ENCODE measurements at regions of chr22 and their contacts with region 1.

Region 1: DNA sequence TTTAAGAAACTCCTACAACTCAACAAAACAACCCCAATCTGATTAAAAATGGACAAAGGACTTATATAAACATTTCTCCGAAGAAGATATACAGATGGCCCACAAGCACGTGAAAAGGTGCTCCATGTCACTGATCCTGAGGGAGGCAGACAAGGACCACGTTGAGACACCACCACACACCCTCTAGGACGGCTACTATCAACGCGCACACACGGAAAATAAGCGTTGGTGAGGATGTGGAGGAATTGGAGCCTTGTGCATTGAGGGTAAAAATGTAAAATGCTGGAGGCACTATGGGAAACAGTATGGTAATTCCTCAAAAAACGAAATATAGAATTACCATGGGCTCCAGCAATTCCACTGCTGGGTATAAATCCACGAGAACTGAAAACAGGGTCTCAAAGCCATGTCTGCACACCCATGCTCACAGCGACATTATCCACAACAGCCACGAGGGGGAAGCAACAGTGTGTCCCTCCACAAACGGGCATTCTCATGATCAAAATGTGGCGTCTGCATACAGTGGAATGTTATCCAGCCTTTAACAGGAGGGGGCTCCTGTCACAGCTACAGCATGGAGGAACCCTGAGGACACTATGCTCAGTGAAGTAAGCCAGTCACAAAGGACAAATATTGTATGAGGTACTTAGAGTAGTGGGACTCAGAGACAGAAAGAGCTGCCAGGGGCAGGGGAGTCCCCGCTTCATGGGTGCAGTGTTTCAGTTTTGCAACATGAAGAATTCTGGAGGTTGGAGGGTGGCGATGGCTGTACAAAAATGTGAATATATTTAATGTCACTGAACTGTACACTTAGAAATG is 22.5 kb downstream of the YPEL1 start:
- DNase-seq: peak; percentile 99
- ATAC-seq: peak; percentile 96
- H3K4me3 ChIP-seq: peak overlapping the region; percentile 5; the same call in 1 of the 2 replicates
- H3K27ac ChIP-seq: no peak overlapping the region; the same call in 2 of the 3 replicates
- H3K4me1 ChIP-seq: peaks cover 9 to 14% of the 10 kb centered on the region in 2 experiments; a peak in 4 of 5 replicates
- H3K27me3 ChIP-seq: peaks cover 41 to 71% of the 10 kb centered on the region in 2 experiments
- CTCF ChIP-seq: peak in 1 of 3 experiments; percentile 98; a peak in 2 of 6 replicates
- EP300 ChIP-seq: peak; percentile 64
- POLR2A ChIP-seq: no peak
- RAD21 ChIP-seq: no peak

Region 2: GRCh38 chr22:21754523-21754922 is 41.4 kb after region 1 on chr22:
- CTCF ChIA-PET with region 1: interaction called, 3 read pairs
- POLR2A ChIA-PET with region 1: interaction called, 6 read pairs
- in situ Hi-C with region 1: no loop called
- intact Hi-C with region 1: loop called (anchors 1 kb)
- DNase-seq: peak; percentile 100
- ATAC-seq: peak; percentile 93
- H3K4me3 ChIP-seq: peak overlapping the region; percentile 4; the same call in 1 of the 2 replicates
- H3K27ac ChIP-seq: peak overlapping the region; percentile 70
- H3K4me1 ChIP-seq: peaks cover 43% of the 10 kb centered on the region in 2 experiments
- H3K27me3 ChIP-seq: no peaks in the 10 kb centered on the region
- CTCF ChIP-seq: no peak
- EP300 ChIP-seq: no peak
- POLR2A ChIP-seq: no peak
- RAD21 ChIP-seq: no peak

Region 3: DNA sequence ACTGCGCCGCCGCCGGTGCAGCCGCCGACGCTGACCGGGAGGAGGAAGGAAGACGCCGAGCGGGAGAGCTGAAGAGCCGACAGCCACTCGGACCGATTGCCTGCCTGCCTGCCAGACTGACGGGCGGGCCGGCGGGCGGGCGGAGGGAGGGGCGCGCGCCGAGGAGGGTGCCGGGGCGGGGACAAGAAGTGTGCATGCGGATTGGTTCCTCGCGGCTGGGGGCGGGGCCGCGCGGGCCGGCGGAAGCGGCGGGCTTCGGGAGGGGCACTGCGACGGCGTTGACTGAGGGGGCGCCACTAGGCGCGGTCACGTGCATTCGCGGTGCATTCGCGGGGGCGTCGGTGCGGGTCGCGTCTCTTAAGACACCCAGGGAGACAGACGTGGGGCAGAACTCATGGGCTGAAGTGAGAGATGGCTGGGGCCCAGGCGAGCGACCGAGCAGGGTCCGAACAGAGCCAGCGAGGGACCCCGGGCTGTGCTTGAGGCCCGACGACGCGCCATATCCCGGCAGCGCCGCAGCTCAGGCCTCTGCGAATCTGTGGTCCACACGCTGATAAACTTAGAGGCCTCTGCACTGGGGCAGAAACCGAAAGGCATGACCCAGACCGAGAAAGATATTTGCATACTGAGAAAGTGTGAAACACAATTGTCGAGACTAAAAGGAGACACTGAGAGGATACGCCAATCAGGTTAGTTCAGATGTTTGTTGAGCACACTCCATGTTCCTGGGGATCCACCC is 154.6 kb after region 1 on chr22 and contains the start of gene MAPK1:
- CTCF ChIA-PET with region 1: interaction called, 9 read pairs
- POLR2A ChIA-PET with region 1: interaction called, 4 read pairs
- in situ Hi-C with region 1: no loop called
- intact Hi-C with region 1: loop called (anchors 1 kb)
- DNase-seq: peak; percentile 100
- ATAC-seq: peak; percentile 92
- H3K4me3 ChIP-seq: peak within 1 kb of the TSS; percentile 55
- H3K27ac ChIP-seq: peak within 1 kb of the TSS; percentile 81
- H3K4me1 ChIP-seq: peaks cover 52 to 57% of the 10 kb centered on the region in 2 experiments
- H3K27me3 ChIP-seq: no peaks in the 10 kb centered on the region
- CTCF ChIP-seq: no peak
- EP300 ChIP-seq: no peak
- POLR2A ChIP-seq: no peak
- RAD21 ChIP-seq: no peak
- polyA plus RNA-seq, gene MAPK1: 46.3 to 51.4 TPM

Region 4: GRCh38 chr22:21938071-21938822 is 225.1 kb after region 1 on chr22:
- CTCF ChIA-PET with region 1: interaction called, 609 read pairs
- POLR2A ChIA-PET with region 1: interaction called, 16 read pairs
- in situ Hi-C with region 1: no loop called
- intact Hi-C with region 1: loop called (anchors 1 kb)
- DNase-seq: peak; percentile 100
- ATAC-seq: peak; percentile 97
- H3K4me3 ChIP-seq: peak overlapping the region; percentile 45
- H3K27ac ChIP-seq: peak overlapping the region; percentile 85
- H3K4me1 ChIP-seq: peaks cover 12 to 52% of the 10 kb centered on the region in 2 experiments
- H3K27me3 ChIP-seq: no peaks in the 10 kb centered on the region
- CTCF ChIP-seq: peak in 2 of 3 experiments; percentile 100; a peak in 4 of 6 replicates
- EP300 ChIP-seq: peak; percentile 83
- POLR2A ChIP-seq: no peak
- RAD21 ChIP-seq: no peak

Region 5: DNA sequence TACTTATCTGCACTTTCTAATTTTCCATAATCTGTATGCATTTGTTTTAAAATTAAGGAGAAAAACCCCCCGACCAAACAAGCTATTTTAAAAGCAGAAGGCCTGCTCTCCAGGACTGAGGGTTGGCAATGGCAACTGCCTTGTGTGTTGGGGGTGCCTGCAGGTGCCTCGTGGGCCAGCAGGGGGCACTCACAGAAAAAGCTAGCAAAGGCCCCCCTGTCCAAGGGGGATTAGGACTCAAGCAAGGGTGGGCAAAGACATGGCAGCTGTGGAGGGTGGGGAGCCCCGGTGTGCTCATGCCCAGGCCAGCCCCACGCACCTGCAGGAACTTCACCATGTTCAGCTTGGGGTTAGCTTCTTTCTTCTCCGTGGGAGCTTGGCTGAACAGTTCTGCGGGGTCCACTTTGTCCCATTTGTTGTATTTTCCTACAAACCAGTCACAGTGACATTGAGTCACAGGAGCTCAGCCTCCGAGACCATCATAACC is 259.2 kb after region 1 on chr22:
- CTCF ChIA-PET with region 1: interaction called, 10 read pairs
- POLR2A ChIA-PET with region 1: no interaction called
- in situ Hi-C with region 1: no loop called
- intact Hi-C with region 1: no loop called
- DNase-seq: peak; percentile 91 to 100 (median 99)
- ATAC-seq: peak; percentile 86
- H3K4me3 ChIP-seq: no peak overlapping the region
- H3K27ac ChIP-seq: no peak overlapping the region
- H3K4me1 ChIP-seq: peaks cover 0 to 19% of the 10 kb centered on the region in 2 experiments; a peak in 1 of 5 replicates
- H3K27me3 ChIP-seq: no peaks in the 10 kb centered on the region
- CTCF ChIP-seq: peak; percentile 97 to 100 (median 99)
- EP300 ChIP-seq: no peak
- POLR2A ChIP-seq: no peak
- RAD21 ChIP-seq: peak in 1 of 2 experiments; percentile 88; a peak in 2 of 4 replicates

Region 6: DNA sequence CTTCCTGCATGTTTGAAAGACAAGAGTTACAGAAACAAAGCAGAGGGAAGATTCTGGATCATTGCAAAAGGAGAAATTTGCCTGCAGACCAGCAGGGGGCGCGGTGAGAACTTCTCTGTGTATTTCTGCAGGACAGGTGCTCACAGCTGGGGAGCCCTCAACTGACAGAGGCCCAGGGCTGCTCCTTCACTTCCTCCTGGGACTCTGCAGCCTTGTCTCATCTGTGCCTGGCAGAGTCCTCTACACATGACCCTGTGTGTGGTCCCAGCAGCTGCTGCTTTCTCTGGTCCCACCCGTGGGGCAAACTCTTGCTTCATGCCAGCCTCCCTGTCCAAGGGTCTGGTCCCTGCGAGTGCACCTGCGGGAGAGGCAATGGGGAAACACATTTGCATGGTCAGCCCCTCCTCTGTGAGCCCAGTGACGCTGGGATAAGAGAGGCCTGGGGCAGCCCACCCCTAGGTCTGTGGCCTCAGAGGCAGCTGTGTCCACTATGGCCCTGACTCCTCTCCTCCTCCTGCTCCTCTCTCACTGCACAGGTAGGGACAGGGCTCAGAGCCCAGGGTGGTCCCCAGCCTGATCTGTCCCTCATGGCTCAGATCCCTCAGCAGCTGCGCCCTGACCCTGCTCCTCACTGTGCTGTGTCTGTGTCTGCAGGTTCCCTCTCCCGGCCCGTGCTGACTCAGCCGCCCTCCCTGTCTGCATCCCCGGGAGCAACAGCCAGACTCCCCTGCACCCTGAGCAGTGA is 488.3 kb after region 1 on chr22:
- CTCF ChIA-PET with region 1: no interaction called
- POLR2A ChIA-PET with region 1: no interaction called
- in situ Hi-C with region 1: no loop called
- intact Hi-C with region 1: loop called (anchors 5 kb)
- DNase-seq: peak; percentile 90 to 95 (median 91)
- ATAC-seq: peak; percentile 87
- H3K4me3 ChIP-seq: no peak overlapping the region
- H3K27ac ChIP-seq: no peak overlapping the region
- H3K4me1 ChIP-seq: peaks cover 0 to 13% of the 10 kb centered on the region in 2 experiments; a peak in 2 of 5 replicates
- H3K27me3 ChIP-seq: peaks cover 44 to 70% of the 10 kb centered on the region in 2 experiments
- CTCF ChIP-seq: peak in 2 of 3 experiments; percentile 99 to 100; a peak in 4 of 6 replicates
- EP300 ChIP-seq: 0 out of 2 replicates have a peak, but pooled peaks have one; percentile 19
- POLR2A ChIP-seq: no peak
- RAD21 ChIP-seq: peak; percentile 36 to 83

Measured in K562 (cell line).